Vagina (tissue), 2 donors: ENCODE measurements at regions of chr6 and their contacts with region 1.

Region 1: DNA sequence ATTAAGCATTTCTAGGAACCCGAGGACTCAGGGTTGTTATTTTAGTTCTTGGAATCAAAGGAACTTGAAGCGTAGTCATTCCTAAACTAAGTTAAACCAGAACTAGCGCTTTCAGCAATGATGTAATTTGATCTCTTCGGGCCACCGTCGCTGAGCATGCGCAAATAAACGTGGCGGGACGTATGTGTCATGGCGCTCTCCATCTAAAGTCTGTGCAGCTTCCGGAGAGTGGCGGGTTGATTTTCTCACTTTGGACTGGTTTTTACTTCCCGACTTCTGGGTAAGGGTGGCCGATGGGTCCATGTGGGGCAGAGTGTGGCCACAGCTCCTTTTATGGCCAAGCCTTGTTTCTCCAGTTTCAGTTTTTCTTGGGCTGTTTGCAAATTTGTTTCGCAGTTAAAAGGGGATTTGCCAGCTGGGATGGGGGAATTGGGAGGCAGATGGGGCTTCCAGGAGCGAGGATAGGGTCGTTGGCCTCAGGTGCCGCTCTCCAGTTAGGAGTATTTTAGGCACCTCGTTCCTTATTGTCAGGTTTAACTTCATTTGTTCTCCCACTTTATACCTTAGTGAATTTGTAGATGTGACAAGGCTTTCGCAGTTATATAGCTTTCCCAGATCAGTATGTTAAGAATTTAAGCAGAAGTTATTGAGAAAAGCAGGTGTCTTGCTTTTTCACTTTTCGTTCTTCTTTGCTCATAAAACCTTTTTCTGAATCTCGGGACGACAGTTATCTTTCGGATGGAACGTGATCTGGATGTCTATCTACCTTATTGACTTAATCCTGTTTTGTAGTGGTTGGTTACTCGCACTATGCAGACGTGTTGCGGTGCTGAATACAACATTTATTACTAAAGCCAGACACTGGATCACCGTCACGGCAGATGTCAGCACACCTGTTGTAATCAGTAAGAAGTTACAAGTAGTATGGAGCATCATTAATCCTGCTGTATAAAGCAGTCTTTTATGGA is at the start of gene CDKAL1:
- DNase-seq: peak in 1 of 2 donors; percentile 91
- H3K4me3 ChIP-seq: peak within 1 kb of the TSS; percentile 66 to 85
- H3K27ac ChIP-seq: peak within 1 kb of the TSS; percentile 81
- H3K4me1 ChIP-seq: peaks cover 18% of the 10 kb centered on the region
- H3K27me3 ChIP-seq: no peaks in the 10 kb centered on the region
- CTCF ChIP-seq: no peak
- POLR2A ChIP-seq: peak in 1 of 2 donors; percentile 22
- total RNA-seq, gene CDKAL1: 11.3 TPM

Region 2: GRCh38 chr6:20109526-20109925 is 425.1 kb before region 1 on chr6:
- intact Hi-C with region 1: loop called (anchors 10 kb)
- DNase-seq: no peak
- H3K4me3 ChIP-seq: no peak overlapping the region
- H3K27ac ChIP-seq: no peak overlapping the region
- H3K4me1 ChIP-seq: no peaks in the 10 kb centered on the region
- H3K27me3 ChIP-seq: no peaks in the 10 kb centered on the region
- CTCF ChIP-seq: no peak
- POLR2A ChIP-seq: no peak

Region 3: GRCh38 chr6:20286968-20287565 is 247.5 kb before region 1 on chr6:
- intact Hi-C with region 1: loop called (anchors 5 kb)
- DNase-seq: no peak
- H3K4me3 ChIP-seq: no peak overlapping the region
- H3K27ac ChIP-seq: no peak overlapping the region
- H3K4me1 ChIP-seq: no peaks in the 10 kb centered on the region
- H3K27me3 ChIP-seq: no peaks in the 10 kb centered on the region
- CTCF ChIP-seq: no peak
- POLR2A ChIP-seq: no peak

Region 4: GRCh38 chr6:20401205-20402091 is 133.1 kb before region 1 on chr6 and contains the start of gene E2F3:
- intact Hi-C with region 1: loop called (anchors 2 kb)
- DNase-seq: peak; percentile 100
- H3K4me3 ChIP-seq: peak within 1 kb of the TSS; percentile 90
- H3K27ac ChIP-seq: peak within 1 kb of the TSS; percentile 88
- H3K4me1 ChIP-seq: peaks cover 12% of the 10 kb centered on the region
- H3K27me3 ChIP-seq: no peaks in the 10 kb centered on the region
- CTCF ChIP-seq: no peak
- POLR2A ChIP-seq: peak in 1 of 2 donors; percentile 31
- total RNA-seq, gene E2F3: 4.4 TPM